OCI-LY7 (cell line): ENCODE measurements at regions of chr2 and their contacts with region 1.

Region 1: GRCh38 chr2:190137561-190137960 is 75.0 kb upstream of the MSTN start:
- DNase-seq: no peak
- H3K4me3 ChIP-seq: no peak overlapping the region
- H3K27ac ChIP-seq: no peak overlapping the region
- H3K4me1 ChIP-seq: no peaks in the 10 kb centered on the region
- CTCF ChIP-seq: no peak

Region 2: GRCh38 chr2:190126798-190127197 is 10.8 kb before region 1 on chr2:
- CTCF ChIA-PET with region 1: no interaction called
- POLR2A ChIA-PET with region 1: interaction called, 13 read pairs
- intact Hi-C with region 1: no loop called
- DNase-seq: no peak
- H3K4me3 ChIP-seq: no peak overlapping the region
- H3K27ac ChIP-seq: no peak overlapping the region
- H3K4me1 ChIP-seq: no peaks in the 10 kb centered on the region
- CTCF ChIP-seq: no peak